HAP-1 (cell line): ENCODE measurements at regions of chr14 and their contacts with region 1.

Region 1: DNA sequence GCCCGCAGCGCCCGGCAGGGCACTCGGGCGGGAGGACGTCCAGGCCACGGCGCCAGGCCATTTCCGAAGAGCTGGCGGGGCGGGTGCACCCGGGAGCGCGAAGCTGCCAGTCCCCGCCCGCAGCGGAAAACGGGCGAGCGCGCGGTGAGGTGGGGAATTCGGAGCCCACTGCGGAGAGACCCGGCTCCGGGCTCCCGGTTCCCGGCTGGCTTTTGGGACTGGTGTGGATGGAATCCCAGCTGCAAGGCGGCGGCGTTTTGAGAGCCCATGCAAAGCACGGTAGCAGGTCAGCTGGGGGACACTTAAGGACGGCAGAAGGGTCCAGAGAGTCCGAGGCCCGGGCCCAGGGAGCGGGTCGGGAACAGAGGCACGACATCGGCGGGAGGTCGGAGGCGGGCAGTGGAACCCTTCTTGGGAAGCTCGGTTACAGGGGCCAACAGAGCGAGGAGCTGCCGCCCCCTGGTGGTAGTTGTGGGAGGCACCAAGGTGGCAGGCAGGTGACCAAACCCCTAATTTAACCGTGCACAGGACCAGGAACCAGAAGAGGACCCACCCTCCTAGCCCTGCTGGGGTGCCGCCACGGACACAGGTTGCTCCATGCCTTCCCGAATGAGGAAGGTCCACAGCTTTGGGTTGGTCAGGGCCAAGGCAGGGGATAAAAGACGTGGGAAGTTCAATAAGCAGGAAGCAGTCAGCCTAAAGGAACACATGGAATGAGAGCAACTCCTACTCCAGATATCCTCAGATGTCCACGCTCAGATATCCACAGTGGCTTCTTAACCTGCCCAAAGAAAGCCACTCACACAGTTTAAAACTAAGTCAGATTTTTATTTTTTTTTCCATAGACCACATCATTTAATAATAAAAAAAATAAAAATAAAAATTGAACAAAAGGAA is 685 bp upstream of the CDH24 start:
- DNase-seq: peak; percentile 87 to 96
- H3K4me3 ChIP-seq: peak overlapping the region; percentile 63
- H3K4me1 ChIP-seq: 0 out of 2 replicates have a peak, but pooled peaks cover 8% of the 10 kb centered on the region
- H3K27me3 ChIP-seq: no peaks in the 10 kb centered on the region

Region 2: DNA sequence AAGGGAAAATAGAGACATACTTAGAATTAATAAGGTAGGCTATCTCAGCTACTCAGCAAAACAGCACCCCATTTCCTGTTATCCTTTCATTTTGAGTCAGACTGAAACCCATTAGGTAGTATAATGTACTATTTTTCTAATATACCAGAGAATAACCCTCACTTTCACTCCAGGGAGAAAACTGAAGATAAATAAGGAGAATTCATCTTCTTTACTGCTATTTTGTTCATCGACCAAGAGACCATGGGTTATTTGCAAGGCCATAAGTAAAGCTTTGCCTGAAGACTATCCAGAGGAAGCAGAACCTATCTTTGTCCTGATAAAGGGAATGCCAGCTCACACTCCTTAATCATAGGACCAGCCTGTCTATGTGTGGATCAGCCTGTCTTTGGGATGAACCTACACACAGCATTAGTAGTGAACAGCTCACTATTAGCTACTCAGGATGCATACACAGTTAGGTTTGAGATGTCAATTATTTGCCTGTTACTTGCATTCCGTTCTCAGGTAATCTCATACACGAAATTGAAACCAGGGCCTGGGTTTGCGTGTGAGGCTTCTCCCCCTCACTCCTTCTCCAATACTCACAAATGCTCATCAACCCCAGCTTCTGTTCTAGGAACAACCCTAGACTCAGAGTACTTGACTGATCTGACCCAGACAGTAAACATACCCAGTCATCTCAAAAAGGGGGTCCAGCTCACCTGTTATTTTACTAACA is 593.4 kb before region 1 on chr14:
- in situ Hi-C with region 1: no loop called
- DNase-seq: no peak
- H3K4me3 ChIP-seq: no peak overlapping the region
- H3K4me1 ChIP-seq: no peaks in the 10 kb centered on the region
- H3K27me3 ChIP-seq: peaks cover 3% of the 10 kb centered on the region; the same call in 1 of the 2 replicates

Region 3: GRCh38 chr14:22570132-22570949 is 487.7 kb before region 1 on chr14:
- in situ Hi-C with region 1: loop called (anchors 25 kb)
- DNase-seq: peak; percentile 68 to 82
- H3K4me3 ChIP-seq: no peak overlapping the region
- H3K4me1 ChIP-seq: peaks cover 3% of the 10 kb centered on the region
- H3K27me3 ChIP-seq: no peaks in the 10 kb centered on the region

Region 4: GRCh38 chr14:22737052-22737451 is 321.0 kb before region 1 on chr14:
- in situ Hi-C with region 1: no loop called
- DNase-seq: no peak
- H3K4me3 ChIP-seq: no peak overlapping the region
- H3K4me1 ChIP-seq: no peaks in the 10 kb centered on the region
- H3K27me3 ChIP-seq: no peaks in the 10 kb centered on the region

Region 5: GRCh38 chr14:22977684-22978486 is 80.1 kb before region 1 on chr14:
- in situ Hi-C with region 1: loop called (anchors 5 kb)
- DNase-seq: peak; percentile 46 to 83
- H3K4me3 ChIP-seq: no peak overlapping the region
- H3K4me1 ChIP-seq: peaks cover 48% of the 10 kb centered on the region
- H3K27me3 ChIP-seq: no peaks in the 10 kb centered on the region

Region 6: GRCh38 chr14:23286020-23286905 is 228.3 kb after region 1 on chr14 and contains the start of gene HOMEZ:
- in situ Hi-C with region 1: no loop called
- DNase-seq: peak; percentile 98 to 99
- H3K4me3 ChIP-seq: peak within 1 kb of the TSS; percentile 69
- H3K4me1 ChIP-seq: peaks cover 6% of the 10 kb centered on the region
- H3K27me3 ChIP-seq: no peaks in the 10 kb centered on the region